HAP-1 (cell line): ENCODE measurements at regions of chr16 and their contacts with region 1.

Region 1: GRCh38 chr16:24036614-24037013 is 200.8 kb downstream of the PRKCB start:
- DNase-seq: peak; percentile 41 to 59
- H3K4me3 ChIP-seq: no peak overlapping the region
- H3K4me1 ChIP-seq: no peaks in the 10 kb centered on the region
- H3K27me3 ChIP-seq: no peaks in the 10 kb centered on the region

Region 2: DNA sequence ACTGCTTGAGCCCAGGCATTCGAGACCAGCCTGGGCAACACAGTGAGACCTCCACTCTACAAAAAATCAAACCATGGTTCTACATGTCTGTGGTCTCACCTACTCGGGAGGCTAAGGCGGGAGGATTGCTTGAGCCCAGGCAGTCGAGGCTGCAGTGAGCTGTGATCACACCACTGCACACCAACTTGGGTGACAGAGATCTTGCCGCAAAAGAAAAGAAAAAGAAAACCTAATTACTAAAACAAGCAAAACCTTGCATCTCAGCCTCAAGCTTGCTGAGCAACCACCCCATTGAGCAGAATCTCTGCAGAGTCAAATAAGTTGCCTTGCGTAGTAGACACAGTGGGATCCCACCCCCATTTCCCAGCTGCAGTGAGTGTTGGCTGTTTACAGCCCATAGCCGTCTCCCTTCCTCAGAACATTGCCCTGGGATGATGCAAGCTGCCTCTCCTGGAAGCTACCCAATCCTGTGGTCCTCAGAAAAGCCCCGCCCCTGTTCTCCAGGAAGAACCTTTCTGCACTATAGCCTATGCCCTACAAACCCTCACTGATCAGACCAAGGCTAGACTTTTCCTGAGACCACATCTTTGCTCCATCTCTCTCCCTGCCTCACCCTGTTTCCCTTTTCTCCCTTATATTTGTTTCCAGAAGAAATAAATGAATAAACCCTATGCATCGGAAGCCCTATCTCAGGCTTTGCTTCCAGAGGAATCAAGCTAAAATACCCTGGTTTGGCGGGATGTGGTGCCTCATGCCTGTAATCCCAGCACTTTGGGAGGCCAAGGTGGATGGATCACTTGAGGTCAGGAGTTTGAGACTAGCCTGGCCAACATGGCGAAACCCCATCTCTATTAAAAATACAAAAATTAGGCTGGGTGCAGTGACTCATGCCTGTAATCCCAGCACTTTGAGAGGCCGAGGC is 306.9 kb before region 1 on chr16:
- in situ Hi-C with region 1: loop called (anchors 10 kb)
- DNase-seq: peak in 1 of 2 experiments; percentile 64
- H3K4me3 ChIP-seq: no peak overlapping the region
- H3K4me1 ChIP-seq: no peaks in the 10 kb centered on the region
- H3K27me3 ChIP-seq: no peaks in the 10 kb centered on the region